ENCODE measurements at regions of chr17 and their contacts with region 1.

Region 1: GRCh38 chr17:35764123-35764991 is 3.7 kb downstream of the C17orf50 start:
- DNase-seq: peak; percentile 89
- H3K4me3 Mint-ChIP-seq: peak overlapping the region; percentile 82
- H3K27ac Mint-ChIP-seq: peak overlapping the region; percentile 65
- H3K4me1 Mint-ChIP-seq: peaks cover 9% of the 10 kb centered on the region
- H3K27me3 Mint-ChIP-seq: peaks cover 4% of the 10 kb centered on the region

Region 2: DNA sequence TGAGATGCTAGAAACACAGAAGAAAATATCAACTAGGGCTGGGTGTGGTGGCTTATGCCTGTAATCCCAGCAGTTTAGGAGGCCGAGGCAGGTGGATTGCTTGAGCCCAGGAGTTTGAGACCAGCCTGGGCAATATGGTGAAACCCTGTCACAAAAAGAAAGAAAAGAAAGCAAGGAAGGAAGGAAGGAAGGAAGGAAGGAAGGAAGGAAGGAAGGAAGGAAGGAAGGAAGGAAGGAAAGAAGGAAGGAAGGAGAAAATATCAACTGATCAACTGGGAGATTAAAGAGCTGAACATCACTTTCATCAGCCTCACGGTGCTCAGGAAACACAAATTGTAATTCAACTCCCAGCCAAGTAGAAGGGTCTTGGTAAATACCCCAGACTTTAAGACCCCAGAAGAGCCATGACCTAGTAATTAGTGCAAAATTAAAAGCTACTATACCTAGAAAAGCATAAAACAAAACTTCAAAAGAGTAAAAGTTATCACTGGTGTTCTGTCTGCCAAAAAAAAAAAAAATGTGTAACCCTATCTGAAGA is 288.0 kb before region 1 on chr17:
- CTCF ChIA-PET with region 1: no interaction called
- POLR2A ChIA-PET with region 1: no interaction called
- DNase-seq: no peak
- H3K4me3 Mint-ChIP-seq: no peak overlapping the region
- H3K27ac Mint-ChIP-seq: no peak overlapping the region
- H3K4me1 Mint-ChIP-seq: peaks cover 40% of the 10 kb centered on the region
- H3K27me3 Mint-ChIP-seq: no peaks in the 10 kb centered on the region

Region 3: DNA sequence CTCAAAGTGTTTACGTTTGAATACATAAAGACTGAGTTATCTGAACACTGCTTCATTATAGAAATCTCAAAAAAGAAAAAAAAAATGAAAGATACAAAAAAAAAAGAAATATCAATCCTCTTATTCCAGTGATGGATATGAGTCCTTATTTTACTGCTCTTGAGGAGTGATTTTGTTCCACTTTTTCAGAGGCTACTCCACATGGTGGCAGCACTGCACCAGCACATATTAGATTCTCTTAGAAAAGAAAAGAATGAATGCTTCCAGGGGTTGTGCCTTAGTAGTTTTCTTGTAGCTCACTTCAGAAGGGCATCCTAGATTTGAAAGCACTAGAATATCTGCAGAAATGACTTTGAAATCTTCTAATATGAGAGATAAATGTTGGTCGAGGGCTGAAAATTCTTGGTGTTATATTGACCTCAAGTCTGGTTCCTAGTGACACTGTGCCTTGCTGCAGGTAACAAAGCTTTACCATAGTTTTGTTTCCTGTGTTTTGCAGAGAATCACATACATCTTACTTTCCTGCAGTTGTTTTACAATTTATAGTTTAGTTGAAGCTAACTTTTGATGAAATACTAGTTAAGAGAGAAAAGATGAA is 151.3 kb before region 1 on chr17:
- CTCF ChIA-PET with region 1: interaction called, 11 read pairs
- POLR2A ChIA-PET with region 1: no interaction called
- DNase-seq: peak; percentile 45
- H3K4me3 Mint-ChIP-seq: no peak overlapping the region
- H3K27ac Mint-ChIP-seq: no peak overlapping the region
- H3K4me1 Mint-ChIP-seq: no peaks in the 10 kb centered on the region
- H3K27me3 Mint-ChIP-seq: no peaks in the 10 kb centered on the region

Region 4: DNA sequence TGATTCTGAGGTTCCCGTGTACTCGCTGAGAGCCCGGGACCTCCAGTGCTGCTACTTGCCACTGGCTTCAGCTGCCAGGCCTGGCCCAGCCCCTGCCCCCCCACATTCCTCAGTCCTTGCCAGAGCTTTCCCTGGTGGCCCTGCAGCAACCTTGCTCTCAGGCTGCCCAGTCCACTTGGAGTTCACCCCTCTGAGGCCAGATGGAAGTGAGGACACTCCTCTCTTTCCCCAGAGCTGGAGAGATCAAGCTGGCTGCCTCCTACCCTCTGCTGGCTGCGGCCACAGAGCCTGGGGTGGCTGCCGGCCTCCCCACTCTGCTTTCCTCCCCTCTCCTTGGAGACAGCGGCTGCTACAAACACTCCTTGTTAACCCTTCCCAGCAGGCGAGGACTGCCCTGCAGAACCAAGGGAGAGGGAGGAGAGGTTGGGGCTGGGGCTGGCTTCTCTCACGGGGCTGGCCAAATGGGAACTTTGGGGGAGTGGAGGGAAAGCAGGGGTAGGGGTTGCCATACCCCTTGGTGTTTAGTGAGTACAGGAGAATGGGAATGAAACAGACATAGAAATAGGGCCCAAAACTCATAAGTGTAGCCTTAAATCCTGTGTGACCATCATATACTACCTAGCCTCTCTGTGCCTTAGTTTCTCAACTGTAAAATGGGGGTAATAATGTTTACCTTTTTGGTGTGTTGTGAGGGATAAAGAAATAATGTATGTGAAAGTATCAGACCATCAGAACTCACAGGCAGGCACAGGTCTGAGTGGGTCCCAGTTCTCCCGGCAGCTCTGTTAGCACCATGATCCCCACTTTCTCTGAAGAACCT is 11.2 kb before region 1 on chr17 and contains the start of gene GAS2L2:
- CTCF ChIA-PET with region 1: interaction called, 18 read pairs
- POLR2A ChIA-PET with region 1: no interaction called
- DNase-seq: no peak
- H3K4me3 Mint-ChIP-seq: no peak within 1 kb of the TSS
- H3K27ac Mint-ChIP-seq: no peak within 1 kb of the TSS
- H3K4me1 Mint-ChIP-seq: peaks cover 10% of the 10 kb centered on the region
- H3K27me3 Mint-ChIP-seq: peaks cover 40% of the 10 kb centered on the region
- total RNA-seq, gene GAS2L2: not detected

Region 5: GRCh38 chr17:35788504-35789368 is 24.4 kb after region 1 on chr17:
- CTCF ChIA-PET with region 1: interaction called, 39 read pairs
- POLR2A ChIA-PET with region 1: interaction called, 3 read pairs
- DNase-seq: no peak
- H3K4me3 Mint-ChIP-seq: no peak overlapping the region
- H3K27ac Mint-ChIP-seq: no peak overlapping the region
- H3K4me1 Mint-ChIP-seq: no peaks in the 10 kb centered on the region
- H3K27me3 Mint-ChIP-seq: peaks cover 46% of the 10 kb centered on the region

Region 6: GRCh38 chr17:35801583-35802224 is 37.3 kb after region 1 on chr17:
- CTCF ChIA-PET with region 1: interaction called, 286 read pairs
- POLR2A ChIA-PET with region 1: interaction called, 4 read pairs
- DNase-seq: no peak
- H3K4me3 Mint-ChIP-seq: no peak overlapping the region
- H3K27ac Mint-ChIP-seq: no peak overlapping the region
- H3K4me1 Mint-ChIP-seq: peaks cover 23% of the 10 kb centered on the region
- H3K27me3 Mint-ChIP-seq: peaks cover 32% of the 10 kb centered on the region

Region 7: GRCh38 chr17:35816723-35817122 is 52.4 kb after region 1 on chr17:
- CTCF ChIA-PET with region 1: interaction called, 286 read pairs
- POLR2A ChIA-PET with region 1: no interaction called
- DNase-seq: no peak
- H3K4me3 Mint-ChIP-seq: no peak overlapping the region
- H3K27ac Mint-ChIP-seq: no peak overlapping the region
- H3K4me1 Mint-ChIP-seq: peaks cover 47% of the 10 kb centered on the region
- H3K27me3 Mint-ChIP-seq: no peaks in the 10 kb centered on the region

Measured in activated CD4-positive, alpha-beta memory T cell treated with anti-CD3 and anti-CD28 coated beads, Interleukin-2, amount 10 ng/mL, durations not matched to agents 7 days and 5 days (primary cell).